HEK293 (cell line): ENCODE measurements at regions of chr14 and their contacts with region 1.

Region 1: DNA sequence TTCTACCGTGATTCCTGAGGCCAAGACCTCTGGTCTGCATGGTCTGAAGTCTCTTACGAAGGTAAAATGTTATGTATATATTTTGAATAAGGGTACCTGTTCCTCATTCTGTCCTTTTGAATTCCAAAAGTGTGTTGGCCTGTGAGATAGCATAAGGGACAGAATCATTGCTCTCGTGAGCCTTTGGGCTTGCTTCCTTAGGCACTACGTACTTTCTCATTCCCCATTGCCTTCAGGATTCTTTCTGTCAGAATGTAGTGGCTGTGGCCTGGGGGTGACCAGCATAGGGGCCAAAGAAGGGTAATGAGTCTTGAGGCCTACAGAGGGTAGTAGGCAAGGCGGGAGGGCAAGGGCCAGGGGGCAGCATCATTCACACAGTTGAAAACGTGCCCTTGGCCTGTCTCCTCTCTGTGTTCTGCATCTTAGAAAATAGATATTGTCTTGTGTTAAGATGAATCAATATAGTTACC is 19.5 kb downstream of the TRAF3 start:
- H3K4me3 ChIP-seq: no peak overlapping the region
- H3K27ac ChIP-seq: no peak overlapping the region
- H3K4me1 ChIP-seq: peaks cover 7% of the 10 kb centered on the region
- CTCF ChIP-seq: no peak

Region 2: GRCh38 chr14:102608064-102608446 is 188.7 kb before region 1 on chr14:
- CTCF ChIA-PET with region 1: no interaction called
- POLR2A ChIA-PET with region 1: no interaction called
- H3K4me3 ChIP-seq: no peak overlapping the region
- H3K27ac ChIP-seq: no peak overlapping the region
- H3K4me1 ChIP-seq: peaks cover 12% of the 10 kb centered on the region; the same call in 1 of the 2 replicates
- CTCF ChIP-seq: no peak

Region 3: DNA sequence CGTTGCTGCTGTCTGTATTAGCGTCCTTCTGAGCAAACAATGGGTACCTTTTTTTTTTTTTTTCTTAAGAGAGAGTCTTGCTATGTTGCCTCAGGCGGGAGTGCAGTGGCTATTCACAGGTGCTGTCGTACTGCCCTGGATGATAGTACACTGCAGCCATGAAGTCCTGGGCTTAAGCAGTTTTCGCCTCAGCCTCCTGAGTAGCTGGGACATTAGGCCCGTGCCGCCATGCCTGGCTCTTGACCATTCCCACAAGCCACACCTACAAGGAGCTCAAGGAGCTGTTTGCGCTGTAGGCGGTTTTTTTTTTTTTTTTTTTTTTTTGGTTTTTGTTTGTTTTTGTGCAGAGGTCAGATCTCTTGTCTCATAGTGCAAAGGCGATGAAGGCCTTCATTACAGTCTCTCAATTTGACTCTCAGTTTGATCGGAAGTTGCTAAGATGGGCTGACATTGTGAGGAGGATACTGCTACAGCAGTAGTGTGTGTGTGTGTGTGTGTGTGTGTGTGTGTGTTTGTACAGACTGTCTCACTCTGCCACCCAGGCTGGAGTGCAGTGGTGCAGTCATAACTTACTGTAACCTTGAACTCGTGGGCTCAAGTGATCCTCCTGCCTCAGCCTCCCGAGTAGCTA is 14.6 kb after region 1 on chr14:
- CTCF ChIA-PET with region 1: interaction called, 10 read pairs
- POLR2A ChIA-PET with region 1: no interaction called
- H3K4me3 ChIP-seq: no peak overlapping the region
- H3K27ac ChIP-seq: no peak overlapping the region
- H3K4me1 ChIP-seq: peaks cover 17% of the 10 kb centered on the region
- CTCF ChIP-seq: no peak

Region 4: DNA sequence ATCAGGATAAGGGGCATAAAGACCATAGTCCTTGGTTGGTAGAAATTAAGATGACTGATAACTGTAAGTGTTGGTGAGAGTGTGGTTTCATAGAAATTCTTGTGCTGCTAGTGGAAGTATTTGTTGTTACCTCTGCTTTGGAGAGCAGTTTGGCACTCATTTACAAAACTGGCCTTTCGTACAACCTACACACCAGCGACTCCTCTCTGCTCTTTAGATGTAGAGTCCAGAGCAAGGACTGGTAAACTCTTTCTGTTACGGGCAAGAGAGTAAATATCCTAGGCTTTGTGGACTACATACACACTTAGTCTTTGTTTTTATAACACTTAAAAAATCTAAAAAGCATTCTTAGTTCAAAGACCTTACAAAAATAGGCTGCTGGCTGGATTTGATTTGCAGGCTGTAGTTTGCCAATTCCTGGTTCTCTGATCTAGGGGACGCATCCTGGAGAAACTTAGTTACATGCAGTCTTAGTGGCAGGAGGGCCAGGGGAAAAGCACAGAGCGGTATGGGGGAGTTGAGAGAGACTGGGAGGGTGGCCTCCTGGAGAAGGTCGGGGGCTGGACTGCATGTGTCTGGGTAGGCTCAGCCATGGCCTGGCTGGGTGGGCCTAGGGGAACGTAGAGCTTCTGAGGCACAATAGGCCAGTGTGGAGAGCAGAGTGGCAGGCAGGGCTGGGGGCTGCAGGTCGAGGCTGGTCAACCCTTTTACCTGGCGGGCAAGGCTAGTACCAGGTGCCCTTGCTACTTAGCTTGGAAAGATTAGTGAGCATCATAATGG is 70.4 kb after region 1 on chr14:
- CTCF ChIA-PET with region 1: no interaction called
- POLR2A ChIA-PET with region 1: no interaction called
- H3K4me3 ChIP-seq: no peak overlapping the region
- H3K27ac ChIP-seq: no peak overlapping the region
- H3K4me1 ChIP-seq: no peaks in the 10 kb centered on the region
- CTCF ChIP-seq: no peak